ENCODE measurements at regions of chr15 and their contacts with region 1.

Region 1: GRCh38 chr15:74906446-74907162 is at the start of gene FAM219B:
- DNase-seq: peak; percentile 95 to 97
- ATAC-seq: peak; percentile 94 to 97 (median 96)
- H3K4me3 ChIP-seq: peak within 1 kb of the TSS; percentile 83
- H3K27ac ChIP-seq: peak within 1 kb of the TSS; percentile 93
- H3K4me1 ChIP-seq: peaks cover 19% of the 10 kb centered on the region
- H3K27me3 ChIP-seq: no peaks in the 10 kb centered on the region
- CTCF ChIP-seq: no peak
- total RNA-seq, gene FAM219B: 41.0 to 78.0 (median 53.7) TPM

Region 2: GRCh38 chr15:74842581-74843444 is 63.8 kb before region 1 on chr15 and contains the start of gene ULK3:
- intact Hi-C with region 1: loop called in 1 of 2 experiments (anchors 5 kb)
- DNase-seq: peak; percentile 94 to 97
- ATAC-seq: peak; percentile 91 to 96 (median 92)
- H3K4me3 ChIP-seq: peak within 1 kb of the TSS; percentile 72
- H3K27ac ChIP-seq: peak within 1 kb of the TSS; percentile 89
- H3K4me1 ChIP-seq: peaks cover 13% of the 10 kb centered on the region
- H3K27me3 ChIP-seq: no peaks in the 10 kb centered on the region
- CTCF ChIP-seq: peak; percentile 85
- total RNA-seq, gene ULK3: 17.7 to 34.5 (median 27.0) TPM

Region 3: DNA sequence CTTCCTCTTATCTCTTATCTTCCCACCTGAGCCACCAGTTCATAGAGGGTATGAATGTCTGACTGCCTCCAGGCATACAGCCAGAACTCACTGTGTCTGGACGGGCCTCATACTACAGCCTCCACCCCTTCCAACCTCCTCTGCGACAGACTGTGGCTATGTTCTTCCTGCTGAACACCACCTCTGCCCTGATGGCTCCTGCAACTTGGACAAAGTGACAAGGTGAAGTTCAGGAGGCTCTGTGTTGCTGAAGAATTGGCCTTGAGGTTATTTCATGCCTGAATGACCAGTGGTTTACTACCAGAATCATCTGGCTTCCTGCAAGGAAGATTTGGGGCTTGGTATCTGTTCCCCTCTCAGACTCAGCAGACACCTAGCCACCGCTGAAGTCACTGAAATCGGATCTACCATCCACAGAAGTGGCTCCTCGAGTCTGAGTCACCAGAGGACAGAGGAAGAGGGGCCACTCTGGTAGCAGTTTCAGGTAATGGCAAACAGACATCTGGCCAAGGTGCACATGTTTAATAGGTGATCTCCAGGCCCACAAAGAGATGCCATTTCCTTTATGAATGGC is 49.4 kb before region 1 on chr15:
- intact Hi-C with region 1: loop called in 1 of 2 experiments (anchors 5 kb)
- DNase-seq: no peak
- ATAC-seq: peak; percentile 45 to 69 (median 59)
- H3K4me3 ChIP-seq: no peak overlapping the region
- H3K27ac ChIP-seq: peak overlapping the region; percentile 53
- H3K4me1 ChIP-seq: peaks cover 42% of the 10 kb centered on the region
- H3K27me3 ChIP-seq: no peaks in the 10 kb centered on the region
- CTCF ChIP-seq: no peak

Region 4: DNA sequence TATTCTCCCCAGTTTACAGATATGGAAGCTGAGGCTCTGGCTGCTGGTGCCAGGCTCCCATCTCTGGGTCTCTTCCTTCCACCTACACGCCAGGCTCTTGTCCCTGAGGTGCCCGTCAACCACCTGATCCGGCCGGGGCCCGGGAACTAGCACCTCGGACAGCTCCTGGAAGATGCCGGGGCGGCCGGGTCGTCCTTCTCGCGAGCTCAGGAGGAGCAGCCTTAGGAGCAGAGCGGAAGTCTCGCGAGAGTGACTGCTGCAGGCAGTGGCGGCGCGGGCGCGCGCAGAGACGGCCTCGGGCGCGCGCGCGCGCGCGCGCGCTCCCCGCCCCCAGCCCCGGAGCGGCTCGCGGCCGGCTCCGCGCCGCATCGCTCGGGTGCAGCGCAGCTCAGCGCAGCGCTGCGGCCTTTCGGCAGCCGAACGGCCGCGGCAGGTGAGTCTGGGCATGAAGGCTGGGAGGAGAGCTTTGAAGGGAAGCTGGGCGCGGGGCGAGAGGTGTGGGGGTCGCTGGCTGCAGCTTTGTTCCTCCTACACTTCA is 88.7 kb after region 1 on chr15 and contains the start of gene SCAMP5:
- intact Hi-C with region 1: no loop called
- DNase-seq: peak; percentile 87 to 92
- ATAC-seq: peak; percentile 90 to 97 (median 93)
- H3K4me3 ChIP-seq: peak within 1 kb of the TSS; percentile 64
- H3K27ac ChIP-seq: no peak within 1 kb of the TSS
- H3K4me1 ChIP-seq: peaks cover 5% of the 10 kb centered on the region
- H3K27me3 ChIP-seq: peaks cover 0 to 52% (median 6%) of the 10 kb centered on the region in 3 donors
- CTCF ChIP-seq: no peak
- total RNA-seq, gene SCAMP5: 0.23 to 6.3 (median 0.97) TPM in 3 of 4 donors, not detected in the other

Measured in psoas muscle (tissue), 8 donors.